Colonic mucosa (tissue), 4 donors: ENCODE measurements at regions of chr11 and their contacts with region 1.

Region 1: GRCh38 chr11:45102810-45103621 is 43.4 kb upstream of the PRDM11 start:
- DNase-seq: peak; percentile 58
- H3K4me3 ChIP-seq: no peak overlapping the region
- H3K27ac ChIP-seq: peak overlapping the region; percentile 28
- H3K4me1 ChIP-seq: no peaks in the 10 kb centered on the region
- H3K27me3 ChIP-seq: no peaks in the 10 kb centered on the region
- CTCF ChIP-seq: peak; percentile 95

Region 2: GRCh38 chr11:44727373-44728287 is 375.4 kb before region 1 on chr11:
- intact Hi-C with region 1: loop called (anchors 5 kb)
- DNase-seq: peak; percentile 75
- H3K4me3 ChIP-seq: peak overlapping the region; percentile 54
- H3K27ac ChIP-seq: no peak overlapping the region
- H3K4me1 ChIP-seq: no peaks in the 10 kb centered on the region
- H3K27me3 ChIP-seq: peaks cover 4% of the 10 kb centered on the region
- CTCF ChIP-seq: peak; percentile 93

Region 3: DNA sequence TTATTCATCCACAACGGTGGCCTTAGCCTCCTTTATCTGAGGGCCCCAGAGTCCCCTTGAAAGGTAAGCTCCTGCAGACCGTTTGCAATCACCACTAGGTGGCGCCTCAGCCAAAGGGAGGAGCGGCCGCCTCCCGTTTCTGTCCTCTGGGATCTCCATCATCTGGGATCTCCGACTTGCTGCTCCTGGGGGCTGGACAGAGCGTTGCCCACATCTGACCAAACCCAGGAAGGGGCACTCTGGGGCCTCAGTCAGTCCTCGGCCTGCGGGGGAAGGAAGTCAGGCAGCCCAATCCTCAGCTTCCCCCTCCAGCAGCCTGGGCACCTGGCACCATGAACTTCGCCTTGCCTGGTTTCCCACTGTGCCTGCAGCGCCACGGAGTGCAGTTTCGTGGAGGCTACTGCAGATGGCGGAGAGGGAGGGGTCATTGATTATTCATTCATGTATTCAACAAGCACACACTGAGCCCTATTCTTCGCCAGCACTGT is 175.8 kb before region 1 on chr11:
- intact Hi-C with region 1: loop called (anchors 2 kb)
- DNase-seq: peak; percentile 77
- H3K4me3 ChIP-seq: no peak overlapping the region
- H3K27ac ChIP-seq: no peak overlapping the region
- H3K4me1 ChIP-seq: no peaks in the 10 kb centered on the region
- H3K27me3 ChIP-seq: no peaks in the 10 kb centered on the region
- CTCF ChIP-seq: peak; percentile 84

Region 4: GRCh38 chr11:44936525-44936924 is 166.5 kb before region 1 on chr11:
- intact Hi-C with region 1: loop called (anchors 2 kb)
- DNase-seq: peak; percentile 86
- H3K4me3 ChIP-seq: no peak overlapping the region
- H3K27ac ChIP-seq: no peak overlapping the region
- H3K4me1 ChIP-seq: no peaks in the 10 kb centered on the region
- H3K27me3 ChIP-seq: no peaks in the 10 kb centered on the region
- CTCF ChIP-seq: peak; percentile 92

Region 5: GRCh38 chr11:45158198-45158731 is 55.2 kb after region 1 on chr11:
- intact Hi-C with region 1: no loop called
- DNase-seq: no peak
- H3K4me3 ChIP-seq: no peak overlapping the region
- H3K27ac ChIP-seq: no peak overlapping the region
- H3K4me1 ChIP-seq: no peaks in the 10 kb centered on the region
- H3K27me3 ChIP-seq: no peaks in the 10 kb centered on the region
- CTCF ChIP-seq: no peak

Region 6: GRCh38 chr11:45500451-45500850 is 397.4 kb after region 1 on chr11:
- intact Hi-C with region 1: no loop called
- DNase-seq: no peak
- H3K4me3 ChIP-seq: no peak overlapping the region
- H3K27ac ChIP-seq: no peak overlapping the region
- H3K4me1 ChIP-seq: no peaks in the 10 kb centered on the region
- H3K27me3 ChIP-seq: no peaks in the 10 kb centered on the region
- CTCF ChIP-seq: no peak